Body of pancreas (tissue), 4 donors: ENCODE measurements at regions of chr15 and their contacts with region 1.

Region 1: DNA sequence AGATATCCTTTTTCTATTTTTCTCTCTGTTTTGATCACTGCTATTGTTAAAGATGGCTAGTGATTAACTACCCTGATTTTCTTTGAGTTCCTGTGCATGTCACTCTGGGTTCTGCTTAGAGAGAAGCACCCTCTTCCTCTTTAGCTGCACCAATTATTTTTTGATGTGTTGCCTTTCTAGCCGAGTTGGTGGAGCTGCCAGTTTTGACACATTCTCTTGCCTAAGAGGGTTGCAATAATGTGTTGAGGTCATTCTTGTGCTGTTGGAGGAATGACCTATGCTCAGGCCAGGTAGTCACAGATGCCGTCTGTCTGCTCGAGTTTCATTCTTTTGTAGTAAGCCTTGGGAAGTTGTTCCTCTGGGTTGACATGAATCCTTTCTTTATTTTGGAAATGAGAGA is 84.6 kb upstream of the DPH6 start:
- DNase-seq: peak in 3 of 4 donors; percentile 8 to 17 (median 11)
- ATAC-seq: peak; percentile 66
- H3K4me3 ChIP-seq: no peak overlapping the region
- H3K27ac ChIP-seq: peak overlapping the region in 2 of 4 donors; percentile 14 to 34
- H3K4me1 ChIP-seq: no peaks in the 10 kb centered on the region
- H3K27me3 ChIP-seq: no peaks in the 10 kb centered on the region
- CTCF ChIP-seq: no peak
- POLR2A ChIP-seq: no peak

Region 2: DNA sequence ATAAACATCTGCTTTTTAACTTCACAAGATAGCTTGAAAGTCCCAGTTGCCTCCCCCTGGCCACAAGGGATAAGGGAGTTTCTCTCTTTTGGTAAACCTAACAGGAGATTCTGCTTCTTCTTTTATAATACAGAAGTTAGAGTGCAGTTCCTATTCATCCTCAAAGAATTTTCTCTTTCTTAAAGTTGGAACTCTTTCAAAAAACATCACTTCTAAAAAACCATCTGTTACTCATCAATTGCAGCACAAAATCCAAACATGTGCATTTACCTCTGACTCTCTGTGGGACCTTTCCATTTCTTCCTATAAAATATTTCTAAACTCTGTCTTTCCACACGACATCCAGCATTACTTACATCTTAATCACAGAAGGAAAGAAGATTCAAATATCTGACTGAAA is 89.6 kb before region 1 on chr15:
- intact Hi-C with region 1: no loop called
- DNase-seq: no peak
- ATAC-seq: no peak
- H3K4me3 ChIP-seq: no peak overlapping the region
- H3K27ac ChIP-seq: no peak overlapping the region
- H3K4me1 ChIP-seq: peaks cover 4% of the 10 kb centered on the region
- H3K27me3 ChIP-seq: no peaks in the 10 kb centered on the region
- CTCF ChIP-seq: no peak
- POLR2A ChIP-seq: no peak

Region 3: GRCh38 chr15:35557544-35557943 is 73.0 kb before region 1 on chr15:
- intact Hi-C with region 1: no loop called
- DNase-seq: no peak
- ATAC-seq: no peak
- H3K4me3 ChIP-seq: no peak overlapping the region
- H3K27ac ChIP-seq: no peak overlapping the region
- H3K4me1 ChIP-seq: no peaks in the 10 kb centered on the region
- H3K27me3 ChIP-seq: no peaks in the 10 kb centered on the region
- CTCF ChIP-seq: no peak
- POLR2A ChIP-seq: no peak

Region 4: GRCh38 chr15:35583863-35584528 is 46.5 kb before region 1 on chr15:
- intact Hi-C with region 1: loop called (anchors 10 kb)
- DNase-seq: no peak
- ATAC-seq: no peak
- H3K4me3 ChIP-seq: no peak overlapping the region
- H3K27ac ChIP-seq: no peak overlapping the region
- H3K4me1 ChIP-seq: peaks cover 4% of the 10 kb centered on the region
- H3K27me3 ChIP-seq: no peaks in the 10 kb centered on the region
- CTCF ChIP-seq: no peak
- POLR2A ChIP-seq: no peak

Region 5: GRCh38 chr15:35595656-35596055 is 34.9 kb before region 1 on chr15:
- intact Hi-C with region 1: no loop called
- DNase-seq: no peak
- ATAC-seq: no peak
- H3K4me3 ChIP-seq: no peak overlapping the region
- H3K27ac ChIP-seq: no peak overlapping the region
- H3K4me1 ChIP-seq: no peaks in the 10 kb centered on the region
- H3K27me3 ChIP-seq: no peaks in the 10 kb centered on the region
- CTCF ChIP-seq: no peak
- POLR2A ChIP-seq: no peak

Region 6: GRCh38 chr15:35697549-35698299 is 67.2 kb after region 1 on chr15:
- intact Hi-C with region 1: no loop called
- DNase-seq: peak in 1 of 4 donors; percentile 21
- ATAC-seq: peak; percentile 40
- H3K4me3 ChIP-seq: no peak overlapping the region
- H3K27ac ChIP-seq: peak overlapping the region in 1 of 4 donors; percentile 36
- H3K4me1 ChIP-seq: peaks cover 20% of the 10 kb centered on the region
- H3K27me3 ChIP-seq: no peaks in the 10 kb centered on the region
- CTCF ChIP-seq: peak in 1 of 7 experiments; percentile 4
- POLR2A ChIP-seq: no peak